Activated CD4-positive, alpha-beta T cell treated with anti-CD3 and anti-CD28 coated beads, Interleukin-2, amount 10 ng/mL, durations not matched to agents 24 days and 14 days (primary cell): ENCODE measurements at regions of chr4 and their contacts with region 1.

Region 1: GRCh38 chr4:26746802-26747213 is 113.8 kb upstream of the STIM2 start:
- DNase-seq: peak; percentile 69
- H3K4me3 Mint-ChIP-seq: no peak overlapping the region
- H3K27ac Mint-ChIP-seq: no peak overlapping the region
- H3K4me1 Mint-ChIP-seq: peaks cover 13% of the 10 kb centered on the region
- H3K27me3 Mint-ChIP-seq: peaks cover 17% of the 10 kb centered on the region

Region 2: DNA sequence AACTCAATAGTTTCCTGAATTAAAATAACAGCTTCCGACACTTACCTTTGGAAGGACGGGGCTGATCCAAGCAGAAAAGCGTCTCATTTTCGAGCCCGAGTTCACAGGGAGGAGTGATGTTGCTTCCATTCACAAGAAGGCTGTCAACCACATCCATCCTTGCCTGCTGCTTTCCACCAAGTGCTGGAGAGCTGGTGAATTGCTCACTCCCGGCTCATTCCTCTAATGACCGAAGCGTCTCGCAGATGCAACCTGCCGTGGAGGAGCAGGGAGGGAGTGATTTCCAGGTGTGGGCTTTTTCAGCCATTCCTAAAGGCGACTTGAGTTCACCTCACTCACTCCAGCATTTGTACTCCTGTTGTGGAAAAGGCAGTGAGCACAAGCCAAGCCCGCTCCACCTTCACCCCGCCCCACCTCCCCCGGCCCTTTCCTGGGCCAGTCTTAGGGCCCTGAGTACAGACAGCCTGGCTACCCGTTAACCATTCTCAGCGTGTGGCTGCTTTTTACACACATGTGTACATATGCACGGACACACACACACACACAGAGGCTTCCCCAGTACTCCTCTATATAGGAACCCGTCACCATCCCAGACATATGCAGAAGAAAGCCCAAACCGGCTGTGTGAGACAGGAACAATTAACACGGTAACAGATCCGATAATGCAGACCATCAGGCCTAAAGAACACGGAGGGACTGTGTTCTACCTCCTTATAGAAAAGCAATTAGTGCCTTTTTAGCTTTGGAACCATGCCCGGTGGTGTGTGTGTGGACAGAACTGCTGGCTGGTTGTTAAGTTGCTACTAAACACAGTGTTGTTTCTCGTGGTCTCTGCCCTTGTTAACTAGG is 256.5 kb before region 1 on chr4 and contains the start of gene CCKAR:
- intact Hi-C with region 1: no loop called
- DNase-seq: no peak
- H3K4me3 Mint-ChIP-seq: no peak within 1 kb of the TSS
- H3K27ac Mint-ChIP-seq: no peak within 1 kb of the TSS
- H3K4me1 Mint-ChIP-seq: no peaks in the 10 kb centered on the region
- H3K27me3 Mint-ChIP-seq: peaks cover 9% of the 10 kb centered on the region
- total RNA-seq, gene CCKAR: not detected in 2 replicates

Region 3: DNA sequence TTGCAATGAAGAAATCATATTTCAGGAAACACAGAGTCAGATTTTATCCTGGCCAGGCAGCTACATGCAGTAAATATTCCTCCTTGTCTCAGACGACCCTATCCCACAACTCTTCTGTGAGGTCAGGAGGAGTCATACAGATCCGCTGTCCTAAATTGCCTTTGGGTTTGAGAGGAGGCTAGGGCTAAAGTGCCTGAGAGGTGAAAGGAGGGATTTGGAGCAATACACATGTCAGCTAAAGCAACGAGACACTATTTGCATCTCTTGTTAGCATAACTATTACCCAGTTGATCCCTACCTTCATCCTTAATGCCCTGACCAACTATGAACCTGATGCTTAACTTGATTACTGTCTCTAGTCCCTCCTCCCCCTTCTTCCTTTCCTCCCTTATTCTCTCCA is 64.4 kb before region 1 on chr4:
- intact Hi-C with region 1: no loop called
- DNase-seq: no peak
- H3K4me3 Mint-ChIP-seq: no peak overlapping the region
- H3K27ac Mint-ChIP-seq: no peak overlapping the region
- H3K4me1 Mint-ChIP-seq: no peaks in the 10 kb centered on the region
- H3K27me3 Mint-ChIP-seq: no peaks in the 10 kb centered on the region

Region 4: GRCh38 chr4:26731351-26732035 is 15.3 kb before region 1 on chr4:
- intact Hi-C with region 1: loop called (anchors 1 kb)
- DNase-seq: no peak
- H3K4me3 Mint-ChIP-seq: no peak overlapping the region
- H3K27ac Mint-ChIP-seq: no peak overlapping the region
- H3K4me1 Mint-ChIP-seq: peaks cover 10% of the 10 kb centered on the region
- H3K27me3 Mint-ChIP-seq: peaks cover 2% of the 10 kb centered on the region

Region 5: DNA sequence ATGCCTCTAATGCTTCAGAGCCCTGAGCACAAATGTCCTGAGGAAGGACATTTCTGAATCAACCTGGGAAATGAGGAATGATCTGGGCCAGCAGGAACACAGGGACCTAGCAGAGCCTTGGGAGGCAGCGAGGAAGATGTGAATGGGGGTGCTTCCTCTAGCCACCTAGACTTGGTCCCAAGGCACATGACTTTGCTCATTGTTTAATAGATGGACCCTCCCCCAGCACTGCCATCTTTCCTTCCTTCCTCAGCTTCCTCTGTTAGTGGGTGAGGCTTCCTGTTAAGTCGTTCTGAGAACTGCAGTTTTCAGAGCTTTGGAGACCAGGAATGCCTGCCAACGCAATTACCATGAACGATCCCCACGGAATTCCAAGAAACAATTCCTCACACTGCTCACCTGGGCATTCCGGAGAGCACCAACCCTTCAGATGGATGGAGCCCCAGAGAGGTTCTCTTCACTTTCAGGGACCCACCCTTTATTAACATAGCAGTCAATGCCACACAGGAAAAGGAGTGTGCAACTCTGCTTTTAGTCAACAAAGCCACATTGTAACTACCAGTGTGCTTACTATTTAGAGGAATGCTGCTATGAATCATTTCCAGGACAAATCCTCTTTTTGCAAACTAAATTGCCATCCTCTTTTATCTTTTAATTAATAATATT is 65.4 kb after region 1 on chr4:
- intact Hi-C with region 1: no loop called
- DNase-seq: no peak
- H3K4me3 Mint-ChIP-seq: peak overlapping the region; percentile 61
- H3K27ac Mint-ChIP-seq: no peak overlapping the region
- H3K4me1 Mint-ChIP-seq: peaks cover 12% of the 10 kb centered on the region
- H3K27me3 Mint-ChIP-seq: peaks cover 2% of the 10 kb centered on the region

Region 6: DNA sequence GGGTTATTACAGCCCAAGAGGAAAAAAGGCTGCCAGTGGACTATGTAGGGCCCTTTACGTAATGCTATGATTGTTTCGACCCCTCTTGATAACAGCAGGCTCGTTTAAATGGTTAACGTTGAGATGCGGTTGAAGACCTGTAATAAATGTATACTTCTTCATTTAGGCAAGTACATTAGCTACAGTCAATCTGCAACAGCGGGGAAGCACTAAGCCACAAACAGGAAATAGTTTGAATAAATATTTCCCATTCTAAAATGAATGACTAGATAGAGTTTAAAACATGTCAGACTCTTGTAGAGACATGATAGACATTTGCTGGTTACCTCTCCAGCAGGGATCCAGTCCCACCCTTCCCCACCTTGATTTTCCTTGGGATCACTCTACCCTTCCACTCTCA is 75.7 kb after region 1 on chr4:
- intact Hi-C with region 1: loop called (anchors 1 kb)
- DNase-seq: no peak
- H3K4me3 Mint-ChIP-seq: no peak overlapping the region
- H3K27ac Mint-ChIP-seq: no peak overlapping the region
- H3K4me1 Mint-ChIP-seq: peaks cover 15% of the 10 kb centered on the region
- H3K27me3 Mint-ChIP-seq: no peaks in the 10 kb centered on the region

Region 7: GRCh38 chr4:26985873-26986272 is 239.1 kb after region 1 on chr4:
- intact Hi-C with region 1: loop called (anchors 5 kb)
- DNase-seq: peak; percentile 87
- H3K4me3 Mint-ChIP-seq: peak overlapping the region; percentile 35
- H3K27ac Mint-ChIP-seq: peak overlapping the region; percentile 60
- H3K4me1 Mint-ChIP-seq: peaks cover 30% of the 10 kb centered on the region
- H3K27me3 Mint-ChIP-seq: no peaks in the 10 kb centered on the region

Region 8: GRCh38 chr4:27123123-27123768 is 376.4 kb after region 1 on chr4:
- intact Hi-C with region 1: no loop called
- DNase-seq: no peak
- H3K4me3 Mint-ChIP-seq: no peak overlapping the region
- H3K27ac Mint-ChIP-seq: no peak overlapping the region
- H3K4me1 Mint-ChIP-seq: no peaks in the 10 kb centered on the region
- H3K27me3 Mint-ChIP-seq: no peaks in the 10 kb centered on the region